Common myeloid progenitor, CD34-positive (primary cell): ENCODE measurements at regions of chr11 and their contacts with region 1.

Region 1: GRCh38 chr11:67630228-67630942 is 648 bp upstream of the NUDT8 start:
- DNase-seq: peak; percentile 95 to 98 (median 98)
- H3K4me3 ChIP-seq: peak overlapping the region; percentile 59 to 78 (median 73)
- H3K27ac ChIP-seq: peak overlapping the region in 1 of 2 experiments; percentile 79
- H3K4me1 ChIP-seq: peaks cover 0 to 40% (median 36%) of the 10 kb centered on the region in 4 experiments
- H3K27me3 ChIP-seq: no peaks in the 10 kb centered on the region

Region 2: DNA sequence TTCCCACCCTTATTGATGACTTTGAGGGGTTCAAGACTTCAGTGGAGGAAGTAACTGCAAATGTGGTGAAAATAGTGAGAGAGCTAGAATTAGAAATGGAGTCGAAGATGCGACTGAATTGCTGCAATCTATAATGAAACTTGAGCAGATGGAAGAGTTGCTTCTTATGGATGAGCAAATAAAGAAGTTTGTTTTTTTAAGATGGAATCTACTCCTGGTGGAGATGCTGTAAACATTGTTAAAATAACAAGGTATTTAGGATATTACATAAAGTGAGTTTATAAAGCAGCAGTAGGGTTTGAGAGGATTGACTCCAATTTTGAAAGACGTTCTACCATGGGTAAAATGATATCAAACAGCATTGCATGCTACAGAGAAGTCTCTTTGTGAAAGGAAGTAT is 428.3 kb before region 1 on chr11:
- CTCF ChIA-PET with region 1: no interaction called
- POLR2A ChIA-PET with region 1: no interaction called
- DNase-seq: no peak
- H3K4me3 ChIP-seq: no peak overlapping the region
- H3K27ac ChIP-seq: no peak overlapping the region
- H3K4me1 ChIP-seq: no peaks in the 10 kb centered on the region
- H3K27me3 ChIP-seq: no peaks in the 10 kb centered on the region

Region 3: GRCh38 chr11:67321313-67321871 is 309.0 kb before region 1 on chr11:
- CTCF ChIA-PET with region 1: no interaction called
- POLR2A ChIA-PET with region 1: no interaction called
- DNase-seq: no peak
- H3K4me3 ChIP-seq: no peak overlapping the region
- H3K27ac ChIP-seq: no peak overlapping the region
- H3K4me1 ChIP-seq: peaks cover 4 to 18% (median 14%) of the 10 kb centered on the region in 4 experiments
- H3K27me3 ChIP-seq: no peaks in the 10 kb centered on the region

Region 4: DNA sequence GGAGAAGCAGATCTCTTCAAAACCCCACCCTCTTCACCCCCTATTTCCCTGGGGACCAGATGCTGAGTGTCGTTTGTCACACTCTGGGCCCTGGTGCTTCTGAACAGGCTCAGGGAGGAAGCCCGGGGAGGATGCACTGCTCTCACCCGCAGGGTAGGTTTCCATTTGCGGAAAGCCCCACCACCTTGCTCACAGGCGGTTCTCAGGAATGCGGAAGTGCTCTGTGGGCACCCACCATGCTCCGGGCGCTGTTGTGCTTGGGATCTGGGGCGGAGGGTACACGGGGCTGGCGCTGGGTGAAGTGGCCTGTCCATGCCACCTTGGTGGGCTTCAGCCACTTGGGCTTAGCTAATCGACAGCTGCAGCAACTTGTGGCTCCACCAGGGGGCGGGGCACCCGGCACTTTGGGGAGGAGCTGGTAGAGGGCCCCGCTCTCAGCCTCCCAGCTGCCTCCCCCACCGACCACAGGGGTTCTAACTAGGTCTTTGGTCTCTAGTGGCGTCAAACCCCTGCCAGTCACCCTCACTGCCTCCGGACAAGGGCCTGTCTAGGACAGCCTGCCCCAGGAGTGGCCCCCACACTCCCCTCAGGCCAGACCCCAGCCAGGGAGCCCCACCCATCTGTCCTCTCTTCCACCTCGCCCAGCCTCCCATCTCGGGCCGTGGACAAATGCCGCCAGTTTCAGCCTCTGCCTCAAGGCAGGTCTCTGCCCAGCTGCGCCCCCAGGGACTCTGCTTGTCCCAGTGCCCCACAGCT is 16.2 kb before region 1 on chr11:
- CTCF ChIA-PET with region 1: interaction called, 81 read pairs
- POLR2A ChIA-PET with region 1: interaction called, 3 read pairs
- DNase-seq: peak; percentile 80 to 96 (median 94)
- H3K4me3 ChIP-seq: peak overlapping the region in 5 of 7 experiments; percentile 29 to 71 (median 53)
- H3K27ac ChIP-seq: peak overlapping the region in 1 of 2 experiments; percentile 74
- H3K4me1 ChIP-seq: peaks cover 0 to 33% (median 32%) of the 10 kb centered on the region in 4 experiments
- H3K27me3 ChIP-seq: no peaks in the 10 kb centered on the region

Region 5: DNA sequence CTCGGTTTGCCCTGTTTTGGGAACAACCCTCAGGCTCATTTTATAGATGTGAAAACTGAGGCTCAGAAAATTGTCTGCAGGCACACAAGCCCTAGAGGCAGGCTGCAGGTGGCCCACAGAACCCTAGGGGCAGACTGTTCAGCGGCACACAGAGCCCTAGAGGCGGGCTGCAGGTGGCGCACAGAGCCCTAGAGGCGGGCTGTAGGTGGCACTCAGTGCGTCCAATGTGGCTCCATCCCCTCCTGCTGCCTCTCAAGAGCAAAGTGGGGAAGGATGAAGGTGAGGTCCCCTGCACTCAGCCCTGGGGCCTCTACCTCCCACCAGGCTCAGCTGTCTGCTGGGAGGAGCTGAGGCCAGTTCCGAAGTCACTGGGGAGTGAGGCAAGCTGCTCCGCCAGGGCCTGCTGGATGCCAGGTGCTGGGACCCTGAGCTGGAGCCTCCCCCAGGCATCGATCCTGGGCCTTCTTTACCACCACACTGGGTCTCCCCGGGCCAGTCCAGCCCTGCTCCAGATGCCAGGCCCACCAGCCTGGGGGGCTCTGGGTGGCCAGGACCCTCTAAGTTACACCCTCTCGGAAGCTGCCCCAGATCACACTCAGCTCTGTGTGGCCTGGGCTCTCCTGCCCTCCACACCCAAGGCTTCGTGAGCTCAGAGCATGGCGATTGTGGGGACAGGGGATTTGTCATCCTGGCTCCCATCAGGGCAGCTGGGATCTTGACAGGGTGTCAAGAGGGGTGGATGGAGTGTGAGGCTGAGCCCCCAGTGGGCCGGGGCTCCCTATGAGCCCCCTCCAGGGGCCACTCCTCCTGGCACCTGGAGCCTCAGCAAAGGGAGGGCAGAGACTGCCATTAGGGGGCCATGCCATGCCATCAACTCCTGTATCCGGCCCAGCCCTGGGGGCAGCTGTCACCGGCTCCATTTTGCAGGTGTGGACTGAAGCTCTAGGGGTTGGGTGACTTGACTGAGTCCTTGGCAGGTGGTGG is 18.0 kb after region 1 on chr11:
- CTCF ChIA-PET with region 1: interaction called, 169 read pairs
- POLR2A ChIA-PET with region 1: interaction called, 5 read pairs
- DNase-seq: peak; percentile 82 to 92 (median 88)
- H3K4me3 ChIP-seq: peak overlapping the region in 4 of 7 experiments; percentile 3 to 77 (median 53)
- H3K27ac ChIP-seq: no peak overlapping the region
- H3K4me1 ChIP-seq: peaks cover 10 to 76% (median 65%) of the 10 kb centered on the region in 4 experiments
- H3K27me3 ChIP-seq: no peaks in the 10 kb centered on the region

Region 6: GRCh38 chr11:67656278-67656922 is 26.0 kb after region 1 on chr11:
- CTCF ChIA-PET with region 1: interaction called, 169 read pairs
- POLR2A ChIA-PET with region 1: interaction called, 5 read pairs
- DNase-seq: peak; percentile 82 to 96 (median 93)
- H3K4me3 ChIP-seq: no peak overlapping the region
- H3K27ac ChIP-seq: no peak overlapping the region
- H3K4me1 ChIP-seq: peaks cover 5 to 24% (median 15%) of the 10 kb centered on the region in 4 experiments
- H3K27me3 ChIP-seq: no peaks in the 10 kb centered on the region

Region 7: GRCh38 chr11:67691149-67691548 is 60.8 kb after region 1 on chr11:
- CTCF ChIA-PET with region 1: interaction called, 14 read pairs
- POLR2A ChIA-PET with region 1: no interaction called
- DNase-seq: no peak
- H3K4me3 ChIP-seq: no peak overlapping the region
- H3K27ac ChIP-seq: no peak overlapping the region
- H3K4me1 ChIP-seq: peaks cover 12 to 20% (median 13%) of the 10 kb centered on the region in 4 experiments
- H3K27me3 ChIP-seq: no peaks in the 10 kb centered on the region

Region 8: DNA sequence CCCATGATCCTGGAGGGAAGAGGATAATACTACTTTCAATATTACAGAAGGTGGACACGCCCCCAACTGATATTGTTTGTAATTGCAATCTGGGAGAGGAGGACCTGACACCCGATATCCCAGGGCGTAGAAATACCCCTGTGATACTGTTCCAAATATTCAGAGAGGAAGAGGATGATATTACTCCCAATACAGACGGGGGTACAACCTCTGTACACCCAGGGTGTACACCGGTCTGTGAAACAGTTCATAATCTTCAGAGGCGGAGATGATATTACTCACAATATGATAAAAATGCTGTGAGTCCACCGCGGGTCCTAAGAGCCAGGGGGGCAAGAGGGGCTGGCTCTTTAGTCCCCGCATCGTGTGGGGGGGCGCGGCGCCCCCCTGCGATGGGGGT is 101.2 kb after region 1 on chr11:
- CTCF ChIA-PET with region 1: no interaction called
- POLR2A ChIA-PET with region 1: no interaction called
- DNase-seq: peak in 1 of 3 donors; percentile 15
- H3K4me3 ChIP-seq: peak overlapping the region in 5 of 7 experiments; percentile 36 to 76 (median 53)
- H3K27ac ChIP-seq: no peak overlapping the region
- H3K4me1 ChIP-seq: peaks cover 0 to 8% (median 3%) of the 10 kb centered on the region in 4 experiments
- H3K27me3 ChIP-seq: peaks cover 0 to 2% (median 0%) of the 10 kb centered on the region in 5 experiments